ENCODE measurements at regions of chr18 and their contacts with region 1.

Region 1: GRCh38 chr18:36296650-36297416 is 680 bp upstream of the FHOD3 start:
- DNase-seq: no peak
- ATAC-seq: peak; percentile 49
- H3K4me3 ChIP-seq: peak overlapping the region; percentile 69
- H3K27ac ChIP-seq: no peak overlapping the region
- H3K4me1 ChIP-seq: no peaks in the 10 kb centered on the region
- H3K27me3 ChIP-seq: peaks cover 0 to 4% of the 10 kb centered on the region in 2 experiments; a peak in 1 of 4 replicates
- CTCF ChIP-seq: peak; percentile 17 to 56 (median 34); a peak in 4 of 6 replicates
- EP300 ChIP-seq: no peak
- POLR2A ChIP-seq: no peak
- RAD21 ChIP-seq: peak; percentile 40; the same call in 1 of the 2 replicates

Region 2: GRCh38 chr18:36309436-36310391 is 12.9 kb after region 1 on chr18:
- CTCF ChIA-PET with region 1: interaction called, 10 read pairs
- POLR2A ChIA-PET with region 1: interaction called, 6 read pairs
- RAD21 ChIA-PET with region 1: interaction called, 24 read pairs
- SMC1A ChIA-PET with region 1: interaction called, 12 read pairs
- in situ Hi-C with region 1: no loop called
- intact Hi-C with region 1: no loop called
- DNase-seq: no peak
- ATAC-seq: peak; percentile 34
- H3K4me3 ChIP-seq: no peak overlapping the region
- H3K27ac ChIP-seq: no peak overlapping the region
- H3K4me1 ChIP-seq: no peaks in the 10 kb centered on the region
- H3K27me3 ChIP-seq: 0 out of 4 replicates have a peak, but pooled peaks cover 0 to under 1% of the 10 kb centered on the region in 2 experiments
- CTCF ChIP-seq: no peak
- EP300 ChIP-seq: no peak
- POLR2A ChIP-seq: no peak
- RAD21 ChIP-seq: no peak

Region 3: DNA sequence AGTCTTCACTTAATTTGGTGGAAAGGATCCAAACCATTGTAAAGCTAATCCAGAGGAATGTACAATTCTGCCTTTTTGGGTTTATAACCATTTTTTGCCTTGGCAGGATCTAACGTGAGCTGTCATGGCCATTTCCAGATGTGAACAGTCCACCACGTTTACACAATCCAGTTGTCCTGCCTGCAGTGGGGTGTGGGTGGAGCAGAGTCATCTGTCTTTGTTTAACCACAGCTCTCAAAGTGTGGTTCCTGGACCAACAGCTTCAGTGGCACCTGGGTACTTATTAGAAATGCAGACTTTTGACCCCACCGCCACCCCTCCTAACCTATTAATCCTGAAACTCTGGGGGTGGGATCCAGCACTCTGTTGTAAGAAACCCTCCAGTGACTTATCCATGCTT is 36.6 kb after region 1 on chr18:
- CTCF ChIA-PET with region 1: interaction called, 10 read pairs
- POLR2A ChIA-PET with region 1: interaction called, 11 read pairs
- RAD21 ChIA-PET with region 1: interaction called, 126 read pairs
- SMC1A ChIA-PET with region 1: interaction called, 125 read pairs
- in situ Hi-C with region 1: no loop called
- intact Hi-C with region 1: no loop called
- DNase-seq: no peak
- ATAC-seq: peak; percentile 26
- H3K4me3 ChIP-seq: no peak overlapping the region
- H3K27ac ChIP-seq: no peak overlapping the region
- H3K4me1 ChIP-seq: peaks cover 10% of the 10 kb centered on the region
- H3K27me3 ChIP-seq: no peaks in the 10 kb centered on the region
- CTCF ChIP-seq: no peak
- EP300 ChIP-seq: no peak
- POLR2A ChIP-seq: no peak
- RAD21 ChIP-seq: no peak

Region 4: GRCh38 chr18:36372903-36373311 is 76.1 kb after region 1 on chr18:
- CTCF ChIA-PET with region 1: interaction called, 3 read pairs
- POLR2A ChIA-PET with region 1: interaction called, 51 read pairs
- RAD21 ChIA-PET with region 1: interaction called, 203 read pairs
- SMC1A ChIA-PET with region 1: interaction called, 212 read pairs
- in situ Hi-C with region 1: no loop called
- intact Hi-C with region 1: no loop called
- DNase-seq: no peak
- ATAC-seq: peak; percentile 57
- H3K4me3 ChIP-seq: no peak overlapping the region
- H3K27ac ChIP-seq: no peak overlapping the region
- H3K4me1 ChIP-seq: no peaks in the 10 kb centered on the region; the same call in 1 of the 2 replicates
- H3K27me3 ChIP-seq: no peaks in the 10 kb centered on the region
- CTCF ChIP-seq: peak; percentile 16 to 33 (median 32); a peak in 3 of 6 replicates
- EP300 ChIP-seq: no peak
- POLR2A ChIP-seq: no peak
- RAD21 ChIP-seq: peak; percentile 53; the same call in 1 of the 2 replicates

Region 5: DNA sequence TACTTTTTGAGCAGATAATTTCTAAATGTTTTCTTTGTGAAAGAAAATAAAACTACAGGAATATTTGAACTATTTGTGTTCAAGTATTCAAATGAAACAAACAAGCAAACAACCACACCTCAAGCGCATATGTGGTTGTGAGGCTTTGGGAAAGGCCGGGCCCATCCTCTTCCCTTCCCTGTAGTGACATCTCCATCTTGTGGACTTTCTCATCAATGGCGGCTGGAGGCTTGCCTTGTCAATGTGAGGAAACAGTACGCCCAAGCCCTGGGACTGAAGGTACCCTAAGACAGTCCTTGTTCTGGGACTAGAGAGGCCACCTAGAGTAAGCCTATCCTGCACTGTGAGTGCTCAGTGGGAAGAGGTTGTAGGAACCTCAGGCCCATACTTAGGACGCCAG is 365.2 kb after region 1 on chr18:
- CTCF ChIA-PET with region 1: no interaction called
- POLR2A ChIA-PET with region 1: no interaction called
- RAD21 ChIA-PET with region 1: interaction called, 3 read pairs
- SMC1A ChIA-PET with region 1: no interaction called
- in situ Hi-C with region 1: no loop called
- intact Hi-C with region 1: loop called (anchors 10 kb)
- DNase-seq: no peak
- ATAC-seq: peak; percentile 58
- H3K4me3 ChIP-seq: no peak overlapping the region
- H3K27ac ChIP-seq: no peak overlapping the region
- H3K4me1 ChIP-seq: no peaks in the 10 kb centered on the region
- H3K27me3 ChIP-seq: no peaks in the 10 kb centered on the region
- CTCF ChIP-seq: peak; percentile 35 to 47 (median 43); a peak in 4 of 6 replicates
- EP300 ChIP-seq: no peak
- POLR2A ChIP-seq: no peak
- RAD21 ChIP-seq: peak; percentile 78

Region 6: GRCh38 chr18:36786686-36787085 is 489.9 kb after region 1 on chr18:
- CTCF ChIA-PET with region 1: no interaction called
- POLR2A ChIA-PET with region 1: no interaction called
- RAD21 ChIA-PET with region 1: no interaction called
- SMC1A ChIA-PET with region 1: no interaction called
- in situ Hi-C with region 1: no loop called
- intact Hi-C with region 1: no loop called
- DNase-seq: no peak
- ATAC-seq: no peak
- H3K4me3 ChIP-seq: no peak overlapping the region
- H3K27ac ChIP-seq: no peak overlapping the region
- H3K4me1 ChIP-seq: no peaks in the 10 kb centered on the region
- H3K27me3 ChIP-seq: no peaks in the 10 kb centered on the region
- CTCF ChIP-seq: no peak
- EP300 ChIP-seq: no peak
- POLR2A ChIP-seq: no peak
- RAD21 ChIP-seq: no peak